Caco-2 (cell line): ENCODE measurements at regions of chr1 and their contacts with region 1.

Region 1: DNA sequence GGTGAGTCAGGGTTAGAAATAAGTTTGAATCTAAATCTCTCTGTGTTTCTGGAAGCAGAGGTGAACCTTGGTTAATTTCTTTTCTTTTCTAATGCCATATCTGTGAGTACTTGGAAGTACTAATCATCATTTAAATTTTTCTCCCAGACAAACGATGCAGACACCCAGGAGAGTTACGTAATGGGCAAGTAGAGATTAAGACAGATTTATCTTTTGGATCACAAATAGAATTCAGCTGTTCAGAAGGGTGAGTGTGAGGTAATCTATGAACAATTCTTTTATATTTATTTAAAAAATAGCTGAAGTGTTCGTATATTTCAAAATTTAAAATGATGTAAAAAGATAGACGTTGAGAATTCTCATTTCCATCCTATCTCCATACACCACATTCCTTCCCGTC is 11.2 kb downstream of the C4BPA start:
- DNase-seq: no peak
- H3K4me3 ChIP-seq: no peak overlapping the region
- H3K4me3 Mint-ChIP-seq: no peak overlapping the region
- H3K27ac Mint-ChIP-seq: no peak overlapping the region
- H3K4me1 ChIP-seq: no peaks in the 10 kb centered on the region
- H3K4me1 Mint-ChIP-seq: peaks cover 6% of the 10 kb centered on the region
- H3K27me3 ChIP-seq: no peaks in the 10 kb centered on the region
- H3K27me3 Mint-ChIP-seq: no peaks in the 10 kb centered on the region
- CTCF ChIP-seq: no peak

Region 2: DNA sequence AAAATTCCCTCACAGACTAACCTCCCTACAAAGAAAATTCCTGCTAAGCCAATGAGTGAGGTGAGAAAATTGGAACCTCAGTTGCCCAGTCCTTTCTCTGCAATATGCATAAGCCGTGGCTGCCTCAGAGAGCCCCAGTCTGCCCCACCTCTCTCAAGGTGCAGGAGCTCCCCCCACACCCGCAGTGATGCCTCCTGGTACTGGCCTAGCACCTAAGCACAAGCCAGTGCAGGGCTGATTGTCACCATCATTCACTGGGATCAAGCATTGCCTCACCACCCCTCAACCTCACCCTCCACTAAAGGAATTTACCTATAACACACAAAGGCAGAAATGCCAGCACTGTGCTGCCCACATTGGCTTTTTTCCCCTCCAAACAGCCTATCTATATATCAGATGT is 738.7 kb after region 1 on chr1:
- CTCF ChIA-PET with region 1: no interaction called
- POLR2A ChIA-PET with region 1: interaction called, 12 read pairs
- intact Hi-C with region 1: no loop called
- DNase-seq: peak in 1 of 2 experiments; percentile 12
- H3K4me3 ChIP-seq: no peak overlapping the region
- H3K4me3 Mint-ChIP-seq: no peak overlapping the region
- H3K27ac Mint-ChIP-seq: no peak overlapping the region
- H3K4me1 ChIP-seq: peaks cover 3% of the 10 kb centered on the region; the same call in 1 of the 2 replicates
- H3K4me1 Mint-ChIP-seq: no peaks in the 10 kb centered on the region
- H3K27me3 ChIP-seq: no peaks in the 10 kb centered on the region
- H3K27me3 Mint-ChIP-seq: no peaks in the 10 kb centered on the region
- CTCF ChIP-seq: no peak